ENCODE measurements at regions of chr12 and their contacts with region 1.

Region 1: GRCh38 chr12:98593351-98594049 is at the start of gene SLC25A3:
- DNase-seq: peak; percentile 98
- total RNA-seq, gene SLC25A3: 1,075 TPM

Region 2: DNA sequence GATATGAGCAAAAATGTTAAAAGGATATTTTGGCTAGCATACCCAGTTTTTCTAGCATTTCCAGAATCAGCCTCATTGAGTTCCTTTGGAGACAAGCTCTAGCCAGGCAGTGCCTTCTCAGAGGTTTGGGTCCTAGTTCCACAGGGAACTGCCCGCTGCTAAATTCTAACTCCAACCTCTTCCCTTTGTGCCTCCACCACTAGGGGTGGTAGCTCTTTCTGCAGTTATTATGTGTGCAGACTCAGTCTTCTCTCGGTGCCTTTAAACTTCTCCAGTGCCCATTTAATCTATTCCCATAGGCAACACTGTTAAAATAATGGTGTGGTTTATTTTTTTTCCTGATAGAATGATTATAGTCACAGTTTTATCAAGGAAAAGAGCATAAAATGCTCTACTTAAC is 21.5 kb before region 1 on chr12:
- intact Hi-C with region 1: loop called (anchors 2 kb)
- DNase-seq: no peak

Region 3: GRCh38 chr12:98644711-98645402 is 51.4 kb after region 1 on chr12 and contains the starts of genes APAF1 and IKBIP:
- intact Hi-C with region 1: loop called (anchors 1 kb)
- DNase-seq: peak; percentile 99
- total RNA-seq, gene APAF1: 5.1 TPM
- total RNA-seq, gene IKBIP: 7.1 TPM

Measured in cardiac septum (tissue), 1 donor.